ENCODE measurements at regions of chr10 and their contacts with region 1.

Region 1: DNA sequence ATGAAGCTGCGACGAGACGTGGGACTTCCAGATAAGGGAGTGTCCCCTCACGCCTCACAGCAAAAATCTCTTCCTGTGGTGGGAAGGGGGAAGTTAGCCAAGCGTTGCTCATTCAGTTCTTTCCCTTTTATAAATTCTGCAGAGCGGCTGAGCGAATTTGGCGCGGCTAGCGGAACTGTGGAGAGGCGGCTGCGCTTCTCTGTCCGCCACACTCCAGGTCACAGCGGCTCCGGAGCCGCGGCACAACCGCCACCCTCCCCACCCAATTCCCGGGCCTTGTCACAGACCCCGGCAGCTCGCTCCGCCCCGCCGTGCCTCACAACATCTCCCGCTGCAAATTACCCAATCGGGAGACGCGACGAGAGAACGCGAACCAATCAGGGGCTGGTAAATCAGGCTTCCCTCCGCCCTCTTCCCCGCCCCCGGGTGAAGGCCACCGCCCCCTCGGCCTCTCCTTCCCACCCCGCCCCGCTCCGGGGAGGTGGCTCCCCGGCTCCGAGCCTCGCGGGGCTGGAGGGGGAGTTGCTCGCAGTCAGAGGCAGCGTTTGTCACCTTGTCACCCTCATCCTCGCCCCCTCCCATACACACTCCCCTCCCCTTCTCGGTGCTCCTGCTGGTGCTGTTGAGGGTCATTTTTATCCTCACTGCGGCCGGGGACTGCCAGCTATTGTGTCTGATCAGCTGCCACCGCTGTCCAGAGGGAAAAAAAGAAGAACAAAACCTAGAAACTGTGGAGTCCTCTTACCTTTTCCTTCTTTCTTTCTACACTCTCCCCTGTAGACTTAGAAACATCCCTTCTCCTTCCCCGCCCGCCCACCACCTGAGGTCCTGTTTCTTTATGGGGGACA is 918 bp upstream of the ARHGAP21 start:
- DNase-seq: peak; percentile 95 to 97
- ATAC-seq: peak; percentile 88 to 94 (median 90)
- H3K4me3 ChIP-seq: peak overlapping the region; percentile 74
- H3K4me3 Mint-ChIP-seq: peak overlapping the region; percentile 89
- H3K27ac ChIP-seq: peak overlapping the region; percentile 76
- H3K27ac Mint-ChIP-seq: peak overlapping the region; percentile 75 to 88
- H3K4me1 ChIP-seq: peaks cover 26% of the 10 kb centered on the region
- H3K4me1 Mint-ChIP-seq: peaks cover 24 to 32% of the 10 kb centered on the region in 2 donors
- H3K27me3 ChIP-seq: no peaks in the 10 kb centered on the region
- H3K27me3 Mint-ChIP-seq: no peaks in the 10 kb centered on the region
- CTCF ChIP-seq: no peak

Region 2: GRCh38 chr10:24680647-24681524 is 43.7 kb before region 1 on chr10:
- intact Hi-C with region 1: no loop called
- DNase-seq: no peak
- ATAC-seq: no peak
- H3K4me3 ChIP-seq: no peak overlapping the region
- H3K4me3 Mint-ChIP-seq: no peak overlapping the region
- H3K27ac ChIP-seq: no peak overlapping the region
- H3K27ac Mint-ChIP-seq: no peak overlapping the region
- H3K4me1 ChIP-seq: no peaks in the 10 kb centered on the region
- H3K4me1 Mint-ChIP-seq: no peaks in the 10 kb centered on the region
- H3K27me3 ChIP-seq: no peaks in the 10 kb centered on the region
- H3K27me3 Mint-ChIP-seq: no peaks in the 10 kb centered on the region
- CTCF ChIP-seq: no peak

Region 3: DNA sequence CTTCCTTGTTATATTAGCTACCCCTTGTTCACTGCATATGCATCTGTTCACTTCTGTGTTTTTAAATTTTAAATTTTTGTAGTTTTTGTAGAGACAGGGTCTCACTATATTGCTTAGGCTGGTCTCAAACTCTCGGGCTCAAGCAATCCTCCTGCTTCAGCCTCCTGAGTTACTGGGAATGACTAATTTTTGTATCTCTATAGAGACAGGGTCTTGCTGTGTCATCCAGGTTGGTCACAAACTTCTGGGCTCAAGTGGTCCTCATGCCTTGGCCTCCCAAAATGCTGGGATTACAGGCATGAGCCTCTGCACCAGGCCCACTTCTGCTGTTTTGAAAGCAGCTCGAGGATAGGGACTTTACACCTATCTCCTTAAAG is 163.2 kb after region 1 on chr10:
- intact Hi-C with region 1: loop called (anchors 5 kb)
- DNase-seq: no peak
- ATAC-seq: peak; percentile 17 to 19 (median 18)
- H3K4me3 ChIP-seq: no peak overlapping the region
- H3K4me3 Mint-ChIP-seq: peak overlapping the region; percentile 79
- H3K27ac ChIP-seq: peak overlapping the region; percentile 69
- H3K27ac Mint-ChIP-seq: peak overlapping the region; percentile 91 to 94
- H3K4me1 ChIP-seq: peaks cover 28% of the 10 kb centered on the region
- H3K4me1 Mint-ChIP-seq: peaks cover 56 to 59% of the 10 kb centered on the region in 2 donors
- H3K27me3 ChIP-seq: no peaks in the 10 kb centered on the region
- H3K27me3 Mint-ChIP-seq: no peaks in the 10 kb centered on the region
- CTCF ChIP-seq: no peak

Region 4: GRCh38 chr10:24952707-24953645 is 228.4 kb after region 1 on chr10:
- intact Hi-C with region 1: loop called (anchors 5 kb)
- DNase-seq: peak; percentile 53 to 75
- ATAC-seq: peak; percentile 74 to 86 (median 85)
- H3K4me3 ChIP-seq: peak overlapping the region; percentile 75
- H3K4me3 Mint-ChIP-seq: peak overlapping the region; percentile 86
- H3K27ac ChIP-seq: no peak overlapping the region
- H3K27ac Mint-ChIP-seq: peak overlapping the region in 1 of 2 donors; percentile 6
- H3K4me1 ChIP-seq: peaks cover 14% of the 10 kb centered on the region
- H3K4me1 Mint-ChIP-seq: peaks cover 6 to 9% of the 10 kb centered on the region in 2 donors
- H3K27me3 ChIP-seq: no peaks in the 10 kb centered on the region
- H3K27me3 Mint-ChIP-seq: no peaks in the 10 kb centered on the region
- CTCF ChIP-seq: peak; percentile 33

Region 5: DNA sequence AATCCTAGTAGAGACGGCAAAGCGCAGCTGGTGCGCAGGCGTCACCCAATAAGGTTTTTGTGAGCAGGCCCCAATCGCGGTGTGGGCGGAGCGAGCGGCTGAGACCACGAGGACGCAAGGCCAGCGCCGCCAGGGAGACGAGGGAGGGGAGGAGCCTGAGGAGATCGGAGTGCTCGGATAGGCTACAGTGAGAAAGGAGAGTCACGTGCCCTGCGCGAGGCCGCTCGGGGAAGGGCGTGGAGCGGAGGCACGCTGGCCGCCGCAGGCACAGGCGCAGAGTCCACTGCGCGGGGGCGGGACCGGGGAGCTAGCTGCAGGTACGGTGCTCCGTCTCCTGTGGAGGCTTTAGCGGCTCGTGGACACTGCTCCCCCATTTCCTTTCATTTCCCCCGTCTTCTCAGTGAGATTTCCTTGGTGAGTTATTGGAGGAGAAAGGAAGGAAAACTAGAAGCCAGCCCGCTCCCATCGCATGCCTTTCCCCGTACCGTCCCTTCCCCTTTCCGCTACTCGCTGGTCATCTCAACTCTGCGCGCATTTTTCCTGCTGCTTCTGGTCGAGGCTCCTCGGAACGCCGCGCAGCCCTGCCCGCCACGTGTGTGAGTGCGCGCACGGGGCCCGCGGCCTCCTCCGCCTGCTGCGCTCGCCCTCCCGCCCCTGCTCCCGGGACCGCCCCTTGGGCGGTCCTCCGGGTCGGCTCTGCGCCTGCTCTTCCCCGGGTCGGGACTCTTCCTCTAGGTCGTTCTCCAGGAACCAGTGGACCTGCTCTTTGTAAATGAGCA is 292.0 kb after region 1 on chr10 and contains the start of gene THNSL1:
- intact Hi-C with region 1: loop called (anchors 1 kb)
- DNase-seq: peak; percentile 96 to 99
- ATAC-seq: peak; percentile 93 to 100 (median 95)
- H3K4me3 ChIP-seq: peak within 1 kb of the TSS; percentile 56
- H3K4me3 Mint-ChIP-seq: peak within 1 kb of the TSS; percentile 98
- H3K27ac ChIP-seq: peak within 1 kb of the TSS; percentile 80
- H3K27ac Mint-ChIP-seq: peak within 1 kb of the TSS; percentile 95 to 99
- H3K4me1 ChIP-seq: peaks cover 8% of the 10 kb centered on the region
- H3K4me1 Mint-ChIP-seq: peaks cover 20 to 21% of the 10 kb centered on the region in 2 donors
- H3K27me3 ChIP-seq: no peaks in the 10 kb centered on the region
- H3K27me3 Mint-ChIP-seq: no peaks in the 10 kb centered on the region
- CTCF ChIP-seq: no peak
- total RNA-seq, gene THNSL1: 1.2 to 2.9 (median 2.3) TPM

Region 6: DNA sequence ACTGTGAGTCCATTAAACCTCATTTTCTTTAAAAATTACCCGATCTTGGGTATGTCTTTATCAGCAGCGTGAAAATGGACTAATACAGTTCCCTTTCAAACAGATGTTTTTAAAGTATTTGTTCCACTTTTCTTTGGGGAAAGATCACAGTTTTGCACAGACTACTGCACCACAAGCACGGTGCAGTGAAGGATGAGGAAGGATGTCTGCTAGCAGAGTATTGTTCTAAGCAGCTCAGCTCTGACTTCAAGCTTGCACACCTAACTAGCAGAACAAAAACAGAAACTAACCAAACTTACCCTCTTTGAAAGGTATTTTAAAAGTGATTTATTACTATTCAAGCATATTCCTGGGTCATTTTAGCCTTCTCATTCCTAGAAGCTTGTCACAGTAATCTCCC is 311.8 kb after region 1 on chr10:
- intact Hi-C with region 1: no loop called
- DNase-seq: no peak
- ATAC-seq: no peak
- H3K4me3 ChIP-seq: no peak overlapping the region
- H3K4me3 Mint-ChIP-seq: no peak overlapping the region
- H3K27ac ChIP-seq: no peak overlapping the region
- H3K27ac Mint-ChIP-seq: no peak overlapping the region
- H3K4me1 ChIP-seq: no peaks in the 10 kb centered on the region
- H3K4me1 Mint-ChIP-seq: no peaks in the 10 kb centered on the region
- H3K27me3 ChIP-seq: peaks cover 2% of the 10 kb centered on the region
- H3K27me3 Mint-ChIP-seq: peaks cover 13 to 33% of the 10 kb centered on the region in 2 donors
- CTCF ChIP-seq: no peak

Measured in natural killer cell (primary cell).